Mammary epithelial cell (primary cell): ENCODE measurements at regions of chr9 and their contacts with region 1.

Region 1: GRCh38 chr9:116377479-116377779 is 223.8 kb downstream of the PAPPA start:
- DNase-seq: peak; percentile 76
- H3K4me3 ChIP-seq: no peak overlapping the region
- H3K27ac ChIP-seq: no peak overlapping the region
- H3K4me1 ChIP-seq: peaks cover 14% of the 10 kb centered on the region
- H3K27me3 ChIP-seq: no peaks in the 10 kb centered on the region
- CTCF ChIP-seq: no peak

Region 2: GRCh38 chr9:116425244-116425643 is 47.8 kb after region 1 on chr9:
- CTCF ChIA-PET with region 1: no interaction called
- dilution Hi-C with region 1: loop called (anchors 5 kb)
- in situ Hi-C with region 1: no loop called
- intact Hi-C with region 1: no loop called
- DNase-seq: no peak
- H3K4me3 ChIP-seq: no peak overlapping the region
- H3K27ac ChIP-seq: no peak overlapping the region
- H3K4me1 ChIP-seq: peaks cover 4% of the 10 kb centered on the region
- H3K27me3 ChIP-seq: no peaks in the 10 kb centered on the region
- CTCF ChIP-seq: no peak

Region 3: GRCh38 chr9:116516456-116516855 is 139.0 kb after region 1 on chr9:
- CTCF ChIA-PET with region 1: no interaction called
- dilution Hi-C with region 1: no loop called
- in situ Hi-C with region 1: no loop called
- intact Hi-C with region 1: no loop called
- DNase-seq: no peak
- H3K4me3 ChIP-seq: no peak overlapping the region
- H3K27ac ChIP-seq: no peak overlapping the region
- H3K4me1 ChIP-seq: no peaks in the 10 kb centered on the region
- H3K27me3 ChIP-seq: no peaks in the 10 kb centered on the region
- CTCF ChIP-seq: no peak